ENCODE measurements at regions of chr6 and their contacts with region 1.

Region 1: DNA sequence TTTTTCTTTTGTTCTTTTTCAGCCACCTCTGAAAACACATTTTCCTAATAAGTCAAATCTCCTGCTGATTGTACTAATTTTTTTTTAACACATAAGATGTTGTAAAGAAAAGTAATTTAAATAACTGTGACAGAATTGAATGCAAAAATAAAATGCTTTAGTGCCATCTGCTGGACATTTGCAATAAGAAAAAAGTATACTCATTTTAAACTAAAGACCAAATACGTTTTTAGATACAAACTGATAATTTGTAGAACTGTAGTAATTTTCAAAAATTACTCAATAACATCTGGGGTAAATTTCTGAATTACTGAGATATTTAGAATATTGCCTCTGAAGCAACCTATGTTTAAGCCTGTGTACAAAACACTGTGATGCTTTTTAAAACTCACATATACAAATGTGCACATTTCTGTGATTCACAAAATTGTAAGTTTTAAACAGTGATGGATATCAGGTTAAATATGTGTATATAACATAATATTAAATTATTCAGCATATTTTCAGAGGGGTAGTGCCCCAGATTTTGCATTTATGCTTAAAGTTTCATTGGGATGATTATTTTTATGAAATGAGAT is 198.7 kb downstream of the RIMS1 start:
- DNase-seq: no peak
- H3K4me3 ChIP-seq: no peak overlapping the region
- H3K27ac ChIP-seq: peak overlapping the region in 1 of 59 donors; percentile 9
- H3K27me3 ChIP-seq: no peaks in the 10 kb centered on the region
- CTCF ChIP-seq: peak; percentile 41 to 86 (median 72)

Region 2: DNA sequence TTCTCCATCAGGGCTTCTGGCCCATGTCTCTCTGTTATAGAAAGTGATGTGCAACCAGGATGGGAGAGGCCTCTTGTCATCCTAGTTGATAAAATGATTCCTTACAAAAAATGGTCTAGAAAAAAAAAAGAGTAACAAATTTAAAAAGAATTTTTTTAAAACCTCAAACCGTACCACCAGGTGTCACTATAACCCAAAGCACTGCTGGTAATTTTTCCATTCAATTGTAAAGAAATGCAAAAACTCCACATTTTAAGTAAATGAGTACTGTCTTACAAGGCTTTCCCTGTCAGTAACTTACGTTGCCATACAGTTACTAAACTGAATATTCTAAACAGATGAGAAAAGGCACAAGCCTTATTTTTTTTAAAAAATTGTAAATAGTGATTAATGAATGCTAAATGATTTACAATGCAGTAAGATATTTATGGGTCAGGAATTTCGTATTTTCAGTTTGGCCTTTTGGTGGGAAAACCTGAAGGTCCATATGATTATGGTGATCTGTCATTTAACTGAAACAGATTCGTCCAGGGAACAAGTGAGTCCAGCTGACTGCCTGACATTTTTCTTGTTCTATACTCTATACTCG is 701.1 kb before region 1 on chr6:
- intact Hi-C with region 1: loop called (anchors 5 to 10 kb)
- DNase-seq: no peak
- H3K4me3 ChIP-seq: no peak overlapping the region
- H3K27ac ChIP-seq: peak overlapping the region in 11 of 59 donors; percentile 4 to 64 (median 29)
- H3K27me3 ChIP-seq: no peaks in the 10 kb centered on the region
- CTCF ChIP-seq: peak; percentile 67 to 97 (median 82)

Region 3: GRCh38 chr6:71533939-71534379 is 551.1 kb before region 1 on chr6:
- intact Hi-C with region 1: loop called (anchors 5 to 10 kb)
- DNase-seq: peak in 1 of 10 donors; percentile 18
- H3K4me3 ChIP-seq: no peak overlapping the region
- H3K27ac ChIP-seq: no peak overlapping the region
- H3K27me3 ChIP-seq: no peaks in the 10 kb centered on the region
- CTCF ChIP-seq: peak; percentile 58 to 88 (median 73)

Region 4: GRCh38 chr6:71621918-71622519 is 463.1 kb before region 1 on chr6:
- intact Hi-C with region 1: loop called in 1 of 2 experiments (anchors 10 kb)
- DNase-seq: no peak
- H3K4me3 ChIP-seq: no peak overlapping the region
- H3K27ac ChIP-seq: no peak overlapping the region
- H3K27me3 ChIP-seq: peaks cover 0 to 6% (median 0%) of the 10 kb centered on the region in 45 donors
- CTCF ChIP-seq: peak in 54 of 56 donors; percentile 4 to 63 (median 43)

Region 5: GRCh38 chr6:72825315-72825911 is 740.3 kb after region 1 on chr6:
- intact Hi-C with region 1: no loop called
- DNase-seq: no peak
- H3K4me3 ChIP-seq: no peak overlapping the region
- H3K27ac ChIP-seq: no peak overlapping the region
- H3K27me3 ChIP-seq: no peaks in the 10 kb centered on the region
- CTCF ChIP-seq: no peak

Measured in dorsolateral prefrontal cortex (tissue), 120 donors.